ENCODE measurements at regions of chr9 and their contacts with region 1.

Region 1: GRCh38 chr9:33024966-33025571 is at the start of gene DNAJA1:
- DNase-seq: peak; percentile 84 to 97 (median 93)
- ATAC-seq: peak; percentile 85 to 92 (median 90)
- H3K4me3 ChIP-seq: peak within 1 kb of the TSS; percentile 94 to 100
- H3K4me3 Mint-ChIP-seq: peak within 1 kb of the TSS; percentile 87 to 96 (median 94)
- H3K27ac ChIP-seq: peak within 1 kb of the TSS; percentile 100
- H3K27ac Mint-ChIP-seq: peak within 1 kb of the TSS; percentile 88 to 93
- H3K4me1 ChIP-seq: peaks cover 31 to 34% of the 10 kb centered on the region in 2 experiments
- H3K4me1 Mint-ChIP-seq: peaks cover 74 to 83% (median 79%) of the 10 kb centered on the region in 3 donors
- H3K27me3 ChIP-seq: no peaks in the 10 kb centered on the region
- H3K27me3 Mint-ChIP-seq: no peaks in the 10 kb centered on the region
- total RNA-seq, gene DNAJA1: 66.5 to 170 (median 69.9) TPM

Region 2: GRCh38 chr9:33007755-33008154 is 17.3 kb before region 1 on chr9:
- CTCF ChIA-PET with region 1: interaction called in 1 of 2 experiments, 3 read pairs
- POLR2A ChIA-PET with region 1: interaction called, 10 to 42 read pairs
- DNase-seq: no peak
- ATAC-seq: no peak
- H3K4me3 ChIP-seq: no peak overlapping the region
- H3K4me3 Mint-ChIP-seq: no peak overlapping the region
- H3K27ac ChIP-seq: no peak overlapping the region
- H3K27ac Mint-ChIP-seq: no peak overlapping the region
- H3K4me1 ChIP-seq: no peaks in the 10 kb centered on the region
- H3K4me1 Mint-ChIP-seq: peaks cover 0 to under 1% (median 0%) of the 10 kb centered on the region in 3 donors
- H3K27me3 ChIP-seq: no peaks in the 10 kb centered on the region
- H3K27me3 Mint-ChIP-seq: no peaks in the 10 kb centered on the region

Region 3: GRCh38 chr9:33044127-33044673 is 19.1 kb after region 1 on chr9:
- CTCF ChIA-PET with region 1: interaction called in 1 of 2 experiments, 3 read pairs
- POLR2A ChIA-PET with region 1: interaction called, 13 to 23 read pairs
- DNase-seq: peak in 34 of 35 experiments; percentile 29 to 83 (median 55)
- ATAC-seq: peak; percentile 61 to 80 (median 70)
- H3K4me3 ChIP-seq: peak overlapping the region; percentile 54 to 80
- H3K4me3 Mint-ChIP-seq: peak overlapping the region; percentile 68 to 76 (median 76)
- H3K27ac ChIP-seq: peak overlapping the region; percentile 31
- H3K27ac Mint-ChIP-seq: peak overlapping the region; percentile 13 to 28
- H3K4me1 ChIP-seq: peaks cover 2 to 13% of the 10 kb centered on the region in 2 experiments
- H3K4me1 Mint-ChIP-seq: peaks cover 16 to 19% (median 18%) of the 10 kb centered on the region in 3 donors
- H3K27me3 ChIP-seq: no peaks in the 10 kb centered on the region
- H3K27me3 Mint-ChIP-seq: no peaks in the 10 kb centered on the region

Region 4: GRCh38 chr9:33076358-33077004 is 51.4 kb after region 1 on chr9 and contains the start of gene SMU1:
- CTCF ChIA-PET with region 1: no interaction called
- POLR2A ChIA-PET with region 1: interaction called, 5 to 11 read pairs
- DNase-seq: peak; percentile 83 to 98 (median 96)
- ATAC-seq: peak; percentile 94 to 99 (median 98)
- H3K4me3 ChIP-seq: peak within 1 kb of the TSS; percentile 76 to 86
- H3K4me3 Mint-ChIP-seq: peak within 1 kb of the TSS; percentile 91 to 99 (median 97)
- H3K27ac ChIP-seq: peak within 1 kb of the TSS; percentile 86
- H3K27ac Mint-ChIP-seq: peak within 1 kb of the TSS; percentile 97 to 100
- H3K4me1 ChIP-seq: peaks cover 21 to 25% of the 10 kb centered on the region in 2 experiments
- H3K4me1 Mint-ChIP-seq: peaks cover 48 to 53% (median 50%) of the 10 kb centered on the region in 3 donors
- H3K27me3 ChIP-seq: no peaks in the 10 kb centered on the region
- H3K27me3 Mint-ChIP-seq: no peaks in the 10 kb centered on the region
- total RNA-seq, gene SMU1: 22.6 to 25.5 (median 24.4) TPM